ENCODE measurements at regions of chr5 and their contacts with region 1.

Region 1: DNA sequence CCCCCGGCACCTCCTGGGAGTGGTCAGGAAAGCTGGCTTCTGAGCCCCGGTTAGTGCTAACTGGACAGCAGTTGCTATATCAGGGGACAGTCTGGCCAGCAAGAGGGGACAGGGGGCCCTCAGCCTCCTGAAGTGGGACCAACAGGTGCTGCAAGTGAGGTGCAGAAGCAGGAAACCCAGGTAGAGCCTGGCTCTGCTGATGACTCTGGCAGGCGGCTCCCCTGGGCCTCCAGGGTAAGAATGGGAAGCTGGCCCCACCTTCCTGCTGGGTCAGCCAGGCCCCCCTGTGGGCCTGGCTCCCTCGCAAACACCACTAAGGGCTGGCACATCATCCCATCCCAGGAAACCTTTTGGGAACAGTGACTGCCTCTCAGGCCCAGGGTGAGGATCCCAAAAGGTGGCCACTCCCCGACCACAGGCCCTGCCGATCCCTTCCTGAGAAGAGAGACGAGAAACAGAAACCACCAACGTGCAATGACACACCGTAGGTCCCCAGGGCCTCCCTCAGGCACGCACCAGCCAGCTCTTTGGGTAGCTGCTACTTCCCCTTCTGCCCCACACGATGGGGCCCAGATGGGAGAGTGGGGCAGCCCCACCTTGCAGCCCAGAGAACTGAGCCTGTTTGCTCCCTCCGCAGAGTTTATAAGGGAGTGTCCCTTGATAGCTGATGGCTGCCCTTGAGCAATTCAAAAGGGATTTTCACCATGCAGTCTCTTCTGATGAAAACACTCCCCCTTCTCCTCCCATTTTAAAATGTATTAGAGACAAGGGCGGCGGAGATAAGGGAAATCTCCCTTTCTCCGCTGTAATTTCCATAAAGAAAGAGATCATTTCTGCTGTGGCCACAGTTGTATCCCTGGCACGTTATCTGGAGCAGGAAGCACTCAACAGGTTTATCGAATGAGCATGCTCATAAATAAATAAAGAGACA is 76.8 kb downstream of the STK10 start:
- DNase-seq: no peak
- H3K4me3 ChIP-seq: no peak overlapping the region
- CTCF ChIP-seq: no peak

Region 2: DNA sequence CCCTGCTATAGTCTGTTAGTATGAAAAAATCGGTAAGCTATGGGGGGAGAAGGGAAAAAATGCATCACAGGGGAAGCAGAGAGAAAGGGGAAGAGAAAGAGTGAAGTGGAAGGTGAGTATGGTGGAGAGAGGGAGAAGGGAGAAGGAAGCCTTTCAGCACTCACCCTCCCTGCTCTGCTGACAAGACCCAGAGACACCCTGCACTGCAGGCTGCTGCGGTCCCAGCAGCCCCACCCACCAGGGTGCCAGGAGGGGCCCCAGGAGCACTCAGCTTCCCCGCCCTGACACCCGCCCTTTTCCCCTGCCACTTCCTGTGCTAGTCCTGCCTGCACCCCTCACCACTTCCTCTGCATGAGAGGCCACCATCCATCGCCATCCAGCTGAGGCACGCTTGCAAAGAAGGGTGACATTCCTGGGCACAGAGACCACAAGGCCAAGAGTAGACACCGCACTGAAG is 64.1 kb after region 1 on chr5:
- in situ Hi-C with region 1: no loop called
- DNase-seq: no peak
- H3K4me3 ChIP-seq: no peak overlapping the region
- CTCF ChIP-seq: no peak

Region 3: DNA sequence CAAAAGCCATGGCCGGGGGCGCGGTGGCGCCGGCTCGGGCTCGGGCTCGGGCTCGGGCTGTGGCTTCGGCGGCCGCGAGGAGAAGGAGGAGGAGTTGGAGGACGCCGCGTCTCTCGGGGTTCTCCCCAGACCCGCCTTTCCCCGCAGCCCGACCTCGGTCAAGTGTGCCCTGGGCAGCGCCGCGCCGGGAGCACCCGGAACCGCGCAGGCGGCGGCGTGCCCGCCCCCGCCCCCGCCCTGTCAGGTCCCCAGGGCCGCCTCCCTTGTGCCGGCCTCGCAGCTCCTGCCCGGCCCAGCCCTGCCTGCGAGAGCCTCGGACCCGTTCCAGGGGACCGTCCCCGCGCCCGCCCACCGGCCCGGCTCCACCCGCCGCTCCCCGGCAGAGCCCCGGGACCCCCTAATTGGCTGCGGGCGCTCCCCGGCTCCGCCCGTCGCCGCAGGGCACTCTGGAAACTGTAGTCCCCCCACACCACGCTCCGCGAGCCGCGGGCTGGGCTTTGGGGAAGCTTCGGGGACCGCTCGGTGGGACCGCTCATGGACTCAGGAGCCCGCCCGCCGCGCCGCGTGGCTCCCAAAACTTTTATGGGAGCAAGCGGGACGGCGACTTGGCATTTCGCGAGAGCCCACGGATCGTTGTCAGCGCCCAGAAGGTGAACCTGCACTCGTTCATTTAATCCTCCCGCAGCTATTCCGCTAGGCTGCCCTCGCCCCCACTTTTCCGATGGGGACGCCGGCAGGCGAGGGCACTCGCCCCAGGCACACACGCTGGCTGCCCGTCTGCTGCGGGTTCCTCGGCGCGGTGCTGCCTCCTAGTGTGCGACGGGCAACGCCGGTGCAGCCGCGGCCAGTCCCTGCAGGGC is 77.1 kb after region 1 on chr5 and contains the start of gene STK10:
- in situ Hi-C with region 1: loop called (anchors 5 kb)
- DNase-seq: peak; percentile 59
- H3K4me3 ChIP-seq: peak within 1 kb of the TSS; percentile 94
- CTCF ChIP-seq: peak; percentile 78

Measured in astrocyte of the cerebellum (primary cell).